Ascending aorta (tissue), 2 donors: ENCODE measurements at regions of chr3 and their contacts with region 1.

Region 1: DNA sequence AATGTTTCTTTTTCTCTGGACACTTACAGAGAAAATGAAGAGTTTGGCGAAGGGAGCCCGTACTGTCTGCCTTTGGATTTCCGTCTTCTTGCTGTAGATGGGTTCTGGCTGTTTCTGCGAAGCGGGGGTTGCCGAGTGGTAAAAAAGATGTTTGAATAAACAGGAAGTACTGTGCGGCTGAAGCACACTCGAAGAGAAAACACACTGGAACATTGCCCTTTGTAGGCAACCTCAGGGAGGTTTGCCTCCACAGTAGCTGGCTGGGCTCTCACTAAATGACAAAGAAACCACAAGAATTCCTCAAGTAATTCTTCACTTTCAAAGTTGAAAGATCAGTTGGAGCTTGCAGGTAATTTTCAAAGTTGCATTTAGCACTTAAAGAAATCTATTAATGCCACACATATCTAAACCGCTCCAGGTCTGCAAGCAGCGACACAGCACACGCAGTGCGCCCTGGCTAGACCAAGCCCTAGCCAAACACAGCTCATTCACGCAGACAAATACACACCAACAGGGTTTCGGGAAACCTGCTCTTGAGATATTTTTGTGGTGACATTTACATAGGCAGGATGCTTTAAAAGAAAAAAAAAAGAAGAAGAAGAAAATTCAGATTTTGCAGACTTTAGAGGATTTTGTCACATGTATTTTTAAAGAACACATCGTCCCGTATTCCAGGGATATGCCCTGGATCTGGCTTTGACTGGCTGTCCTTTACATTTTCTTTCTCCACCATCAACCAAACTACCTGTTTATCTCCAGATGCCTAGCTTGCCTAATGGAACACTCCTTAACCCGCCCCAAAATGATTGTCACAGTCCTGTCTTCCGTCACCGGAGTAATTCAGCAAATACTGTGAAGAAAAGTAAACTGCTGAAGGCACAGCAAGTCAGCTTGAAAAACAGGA is 452.8 kb downstream of the FOXP1 start:
- DNase-seq: peak in 1 of 2 donors; percentile 85
- H3K4me3 ChIP-seq: peak overlapping the region; percentile 49 to 73
- H3K27ac ChIP-seq: peak overlapping the region; percentile 85 to 90
- H3K4me1 ChIP-seq: peaks cover 2 to 36% of the 10 kb centered on the region in 2 donors
- H3K27me3 ChIP-seq: no peaks in the 10 kb centered on the region
- CTCF ChIP-seq: no peak

Region 2: DNA sequence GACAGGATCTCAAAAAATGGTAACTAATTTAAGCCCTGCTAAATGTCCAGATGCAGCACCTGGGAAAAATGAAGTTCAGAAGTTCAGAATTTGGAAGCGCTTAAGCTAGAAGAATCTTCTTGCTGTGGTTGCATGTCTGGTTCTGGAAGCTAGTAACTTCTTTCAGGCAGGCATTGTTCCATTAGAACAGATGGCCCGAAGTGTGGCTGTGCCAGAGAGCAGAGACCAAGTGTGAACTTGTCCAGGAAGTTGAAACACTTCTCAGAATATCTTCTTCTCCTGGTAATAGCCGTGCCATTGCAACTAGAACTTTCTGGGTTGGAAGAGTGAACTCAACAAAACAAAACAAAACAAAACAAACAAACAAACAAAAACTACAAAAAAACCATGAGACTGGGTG is 1311.4 kb before region 1 on chr3:
- intact Hi-C with region 1: no loop called
- DNase-seq: no peak
- H3K4me3 ChIP-seq: no peak overlapping the region
- H3K27ac ChIP-seq: no peak overlapping the region
- H3K4me1 ChIP-seq: peaks cover 6 to 27% of the 10 kb centered on the region in 2 donors
- H3K27me3 ChIP-seq: no peaks in the 10 kb centered on the region
- CTCF ChIP-seq: no peak

Region 3: DNA sequence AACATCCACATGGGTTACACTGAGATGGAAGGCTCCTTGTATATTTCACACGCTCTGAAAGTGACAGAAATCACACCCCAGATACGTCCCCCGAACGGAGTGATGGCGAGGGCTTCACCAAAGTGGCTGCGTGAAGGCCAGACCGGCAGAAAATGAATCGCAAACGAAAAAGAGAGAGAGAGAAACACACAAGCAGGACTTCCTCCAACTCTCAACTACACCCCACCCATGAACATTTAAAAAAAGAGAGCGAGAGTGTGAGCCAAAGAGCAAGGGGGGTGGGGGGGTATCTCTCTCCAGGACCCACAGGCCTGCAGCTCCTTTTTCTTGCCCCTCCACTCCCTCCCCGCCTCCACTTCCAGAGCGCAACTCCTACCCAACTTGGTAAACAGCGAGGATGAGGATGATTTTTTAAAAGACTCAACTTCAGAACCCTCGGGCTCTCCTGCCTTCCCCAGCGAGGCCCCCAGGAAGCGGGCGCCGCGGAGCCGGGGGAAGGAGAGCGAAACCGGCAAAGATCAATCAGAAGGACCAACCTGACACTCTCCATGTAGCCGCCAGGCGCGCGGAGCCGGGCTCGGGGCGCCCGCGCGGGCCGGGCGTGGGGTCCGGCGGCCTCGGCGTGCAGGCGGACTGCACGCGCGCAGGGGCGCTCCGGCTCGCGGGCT is 66.3 kb before region 1 on chr3:
- intact Hi-C with region 1: loop called (anchors 5 kb)
- DNase-seq: peak in 1 of 2 donors; percentile 76
- H3K4me3 ChIP-seq: peak overlapping the region; percentile 66 to 80
- H3K27ac ChIP-seq: peak overlapping the region; percentile 95 to 98
- H3K4me1 ChIP-seq: peaks cover 3 to 41% of the 10 kb centered on the region in 2 donors
- H3K27me3 ChIP-seq: no peaks in the 10 kb centered on the region
- CTCF ChIP-seq: peak in 1 of 3 experiments; percentile 51

Region 4: GRCh38 chr3:71069797-71070196 is 60.9 kb before region 1 on chr3:
- intact Hi-C with region 1: loop called (anchors 2 kb)
- DNase-seq: peak in 1 of 2 donors; percentile 87
- H3K4me3 ChIP-seq: peak overlapping the region in 1 of 2 donors; percentile 44
- H3K27ac ChIP-seq: peak overlapping the region; percentile 98 to 99
- H3K4me1 ChIP-seq: peaks cover 6 to 54% of the 10 kb centered on the region in 2 donors
- H3K27me3 ChIP-seq: no peaks in the 10 kb centered on the region
- CTCF ChIP-seq: peak; percentile 26 to 54 (median 51)

Region 5: GRCh38 chr3:71109241-71109976 is 21.3 kb before region 1 on chr3:
- intact Hi-C with region 1: loop called (anchors 2 kb)
- DNase-seq: no peak
- H3K4me3 ChIP-seq: peak overlapping the region in 1 of 2 donors; percentile 22
- H3K27ac ChIP-seq: peak overlapping the region; percentile 72
- H3K4me1 ChIP-seq: peaks cover 0 to 76% of the 10 kb centered on the region in 2 donors
- H3K27me3 ChIP-seq: no peaks in the 10 kb centered on the region
- CTCF ChIP-seq: no peak

Region 6: GRCh38 chr3:71163198-71163918 is 32.6 kb after region 1 on chr3:
- intact Hi-C with region 1: loop called (anchors 2 kb)
- DNase-seq: no peak
- H3K4me3 ChIP-seq: peak overlapping the region in 1 of 2 donors; percentile 49
- H3K27ac ChIP-seq: peak overlapping the region; percentile 68 to 87
- H3K4me1 ChIP-seq: peaks cover 7 to 25% of the 10 kb centered on the region in 2 donors
- H3K27me3 ChIP-seq: no peaks in the 10 kb centered on the region
- CTCF ChIP-seq: no peak

Region 7: DNA sequence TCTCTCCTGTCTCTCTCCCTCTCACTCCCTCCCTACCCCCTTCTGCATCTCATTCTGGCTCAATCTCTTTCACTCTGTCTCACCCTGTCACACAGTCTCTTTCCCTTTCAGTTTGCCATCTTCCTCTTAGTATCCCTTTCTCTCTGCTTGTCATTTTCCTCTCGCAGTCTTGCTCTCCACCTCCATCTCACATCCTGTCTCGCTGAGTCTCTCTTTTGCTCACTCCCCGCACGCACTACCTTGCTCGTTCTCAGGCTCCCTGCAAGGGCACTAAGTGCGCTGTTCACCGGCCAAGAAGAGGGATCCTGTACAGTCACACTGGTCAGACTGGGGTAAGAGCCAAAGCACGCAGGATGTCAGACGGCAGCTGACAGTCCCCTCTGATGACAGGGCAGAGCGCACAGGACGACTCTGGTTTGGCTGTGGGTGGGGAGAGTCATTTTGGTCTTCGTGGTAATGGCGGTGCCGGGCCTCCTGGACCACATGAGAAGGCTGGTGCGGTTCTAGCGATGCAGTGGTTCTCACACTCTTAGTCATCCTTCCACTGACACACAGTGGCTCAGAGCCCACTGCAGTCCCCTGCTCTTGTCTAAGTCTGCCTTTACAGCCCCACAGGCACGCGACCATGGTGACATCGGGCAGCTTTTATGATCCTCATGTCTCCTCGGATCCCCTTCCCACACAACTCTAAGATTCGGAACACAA is 96.0 kb after region 1 on chr3:
- intact Hi-C with region 1: loop called (anchors 5 kb)
- DNase-seq: peak; percentile 18 to 74
- H3K4me3 ChIP-seq: peak overlapping the region; percentile 40 to 56
- H3K27ac ChIP-seq: peak overlapping the region; percentile 87 to 88
- H3K4me1 ChIP-seq: peaks cover 0 to 30% of the 10 kb centered on the region in 2 donors
- H3K27me3 ChIP-seq: no peaks in the 10 kb centered on the region
- CTCF ChIP-seq: no peak

Region 8: GRCh38 chr3:71247221-71247976 is 116.7 kb after region 1 on chr3:
- intact Hi-C with region 1: loop called (anchors 5 kb)
- DNase-seq: peak in 1 of 2 donors; percentile 58
- H3K4me3 ChIP-seq: no peak overlapping the region
- H3K27ac ChIP-seq: peak overlapping the region; percentile 69 to 86
- H3K4me1 ChIP-seq: peaks cover 0 to 21% of the 10 kb centered on the region in 2 donors
- H3K27me3 ChIP-seq: no peaks in the 10 kb centered on the region
- CTCF ChIP-seq: no peak

Region 9: DNA sequence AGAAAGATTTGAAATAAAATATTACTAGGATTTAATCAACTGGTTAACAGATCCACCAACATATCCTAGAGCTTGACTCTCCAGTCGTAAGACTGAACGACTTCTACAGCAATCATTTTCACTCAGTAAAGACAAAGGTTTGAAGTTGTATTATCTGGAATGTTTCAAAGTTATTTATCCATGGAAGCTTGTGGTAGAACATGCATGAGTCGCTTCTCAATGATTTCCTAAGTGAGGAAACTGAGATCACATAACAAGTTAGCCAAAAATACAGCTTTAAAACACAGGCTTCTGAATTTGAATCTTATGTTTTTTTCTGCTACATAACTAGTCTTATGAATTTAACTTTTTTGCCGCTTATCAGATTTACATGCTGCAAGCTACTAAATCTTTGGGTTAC is 211.0 kb after region 1 on chr3:
- intact Hi-C with region 1: no loop called
- DNase-seq: no peak
- H3K4me3 ChIP-seq: no peak overlapping the region
- H3K27ac ChIP-seq: no peak overlapping the region
- H3K4me1 ChIP-seq: peaks cover 0 to 10% of the 10 kb centered on the region in 2 donors
- H3K27me3 ChIP-seq: no peaks in the 10 kb centered on the region
- CTCF ChIP-seq: no peak

Region 10: GRCh38 chr3:72134989-72135451 is 1004.3 kb after region 1 on chr3:
- intact Hi-C with region 1: no loop called
- DNase-seq: no peak
- H3K4me3 ChIP-seq: no peak overlapping the region
- H3K27ac ChIP-seq: no peak overlapping the region
- H3K4me1 ChIP-seq: peaks cover 0 to under 1% of the 10 kb centered on the region in 2 donors
- H3K27me3 ChIP-seq: no peaks in the 10 kb centered on the region
- CTCF ChIP-seq: no peak